ENCODE measurements at regions of chr3 and their contacts with region 1.

Region 1: GRCh38 chr3:142595951-142596725 is at the start of gene PLS1:
- DNase-seq: peak; percentile 83
- H3K4me3 Mint-ChIP-seq: peak within 1 kb of the TSS; percentile 94
- H3K27ac Mint-ChIP-seq: peak within 1 kb of the TSS; percentile 66
- H3K4me1 Mint-ChIP-seq: peaks cover 14% of the 10 kb centered on the region
- H3K27me3 Mint-ChIP-seq: no peaks in the 10 kb centered on the region
- total RNA-seq, gene PLS1: 5.3 to 5.4 TPM

Region 2: GRCh38 chr3:142680710-142681109 is 84.6 kb after region 1 on chr3:
- CTCF ChIA-PET with region 1: no interaction called
- intact Hi-C with region 1: no loop called
- DNase-seq: no peak
- H3K4me3 Mint-ChIP-seq: no peak overlapping the region
- H3K27ac Mint-ChIP-seq: no peak overlapping the region
- H3K4me1 Mint-ChIP-seq: no peaks in the 10 kb centered on the region
- H3K27me3 Mint-ChIP-seq: no peaks in the 10 kb centered on the region

Region 3: GRCh38 chr3:142723968-142724681 is 128.0 kb after region 1 on chr3 and contains the start of gene TRPC1:
- CTCF ChIA-PET with region 1: no interaction called
- intact Hi-C with region 1: loop called (anchors 1 kb)
- DNase-seq: peak; percentile 57
- H3K4me3 Mint-ChIP-seq: peak within 1 kb of the TSS; percentile 83
- H3K27ac Mint-ChIP-seq: peak within 1 kb of the TSS; percentile 82
- H3K4me1 Mint-ChIP-seq: peaks cover 10% of the 10 kb centered on the region
- H3K27me3 Mint-ChIP-seq: peaks cover 20% of the 10 kb centered on the region
- total RNA-seq, gene TRPC1: 3.1 to 4.8 TPM

Region 4: GRCh38 chr3:142787719-142788118 is 191.6 kb after region 1 on chr3:
- CTCF ChIA-PET with region 1: no interaction called
- intact Hi-C with region 1: no loop called
- DNase-seq: no peak
- H3K4me3 Mint-ChIP-seq: no peak overlapping the region
- H3K27ac Mint-ChIP-seq: no peak overlapping the region
- H3K4me1 Mint-ChIP-seq: no peaks in the 10 kb centered on the region
- H3K27me3 Mint-ChIP-seq: no peaks in the 10 kb centered on the region